ENCODE measurements at regions of chrX and their contacts with region 1.

Region 1: DNA sequence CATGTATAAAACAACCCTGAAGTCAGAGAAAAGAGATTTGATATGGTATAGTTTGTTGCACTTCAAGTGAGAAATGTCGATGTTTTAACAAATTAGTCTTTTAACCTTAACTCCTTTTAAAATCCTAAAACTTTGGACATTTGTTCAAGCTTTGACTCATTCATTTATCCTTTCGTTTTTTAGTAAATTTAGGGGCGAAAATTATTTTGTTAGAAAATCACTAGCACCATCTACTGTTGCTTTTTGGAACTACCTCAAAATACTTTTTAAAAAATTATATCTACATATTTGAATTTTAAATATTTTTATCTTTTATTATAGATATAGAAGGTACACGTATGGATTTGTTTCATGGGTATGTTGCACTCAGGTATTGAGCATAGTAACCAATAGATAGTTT is 165.1 kb upstream of the POF1B start:
- DNase-seq: no peak
- H3K4me3 ChIP-seq: peak overlapping the region in 1 of 4 donors; percentile 25
- H3K27ac ChIP-seq: no peak overlapping the region
- H3K4me1 ChIP-seq: no peaks in the 10 kb centered on the region
- H3K27me3 ChIP-seq: no peaks in the 10 kb centered on the region
- CTCF ChIP-seq: peak; percentile 15 to 64 (median 36)
- POLR2A ChIP-seq: no peak

Region 2: DNA sequence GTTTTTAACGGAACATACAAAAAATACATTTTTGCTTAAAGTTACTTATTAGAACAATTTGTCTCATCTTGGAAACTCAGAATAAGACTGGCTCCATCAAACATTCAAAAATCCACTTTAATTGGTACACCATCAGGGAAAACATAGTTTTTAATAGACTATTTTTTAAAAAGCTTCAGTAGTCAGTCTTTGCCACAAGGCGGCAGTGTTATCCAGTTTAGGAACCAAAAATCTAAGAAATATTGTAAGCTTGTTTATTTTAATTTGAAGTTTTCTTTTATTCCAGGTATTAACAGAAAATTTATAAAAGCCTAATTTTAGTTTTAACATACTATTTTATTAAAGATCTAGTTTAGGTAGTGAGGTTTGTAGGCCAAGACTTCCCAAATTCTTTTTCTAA is 433.3 kb before region 1 on chrX:
- intact Hi-C with region 1: loop called (anchors 5 to 10 kb)
- DNase-seq: peak in 3 of 7 donors; percentile 15 to 32 (median 24)
- H3K4me3 ChIP-seq: no peak overlapping the region
- H3K27ac ChIP-seq: no peak overlapping the region
- H3K4me1 ChIP-seq: no peaks in the 10 kb centered on the region
- H3K27me3 ChIP-seq: peaks cover 7% of the 10 kb centered on the region
- CTCF ChIP-seq: peak; percentile 48 to 78 (median 60)
- POLR2A ChIP-seq: no peak